ENCODE measurements at regions of chr10 and their contacts with region 1.

Region 1: GRCh38 chr10:9253108-9253507 is 1198.6 kb downstream of the GATA3 start:
- DNase-seq: no peak
- H3K4me3 ChIP-seq: no peak overlapping the region
- H3K27ac ChIP-seq: no peak overlapping the region
- H3K4me1 ChIP-seq: no peaks in the 10 kb centered on the region
- H3K27me3 ChIP-seq: no peaks in the 10 kb centered on the region
- CTCF ChIP-seq: no peak
- POLR2A ChIP-seq: no peak

Region 2: GRCh38 chr10:9311702-9312499 is 58.8 kb after region 1 on chr10:
- intact Hi-C with region 1: no loop called
- DNase-seq: no peak
- H3K4me3 ChIP-seq: no peak overlapping the region
- H3K27ac ChIP-seq: no peak overlapping the region
- H3K4me1 ChIP-seq: no peaks in the 10 kb centered on the region
- H3K27me3 ChIP-seq: no peaks in the 10 kb centered on the region
- CTCF ChIP-seq: no peak
- POLR2A ChIP-seq: no peak

Region 3: DNA sequence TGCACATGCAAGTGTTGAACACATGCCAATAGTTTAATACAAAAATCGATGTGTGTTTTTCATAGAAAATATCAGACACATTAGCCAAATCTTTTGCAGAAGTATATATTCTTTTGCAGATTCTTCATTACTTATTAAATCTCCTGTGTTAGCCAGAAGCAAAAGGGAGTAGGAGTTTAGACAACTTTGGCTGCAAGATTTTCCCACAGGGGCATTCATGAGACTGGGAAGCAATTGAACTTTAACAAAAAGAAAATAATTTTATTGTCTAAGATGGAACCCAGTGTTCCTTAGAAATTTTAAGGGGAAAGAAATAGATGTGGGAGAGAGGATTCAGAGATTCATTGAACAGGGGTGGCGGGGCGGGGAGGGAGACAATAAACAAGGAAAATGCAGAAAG is 137.4 kb after region 1 on chr10:
- intact Hi-C with region 1: no loop called
- DNase-seq: no peak
- H3K4me3 ChIP-seq: no peak overlapping the region
- H3K27ac ChIP-seq: no peak overlapping the region
- H3K4me1 ChIP-seq: no peaks in the 10 kb centered on the region
- H3K27me3 ChIP-seq: no peaks in the 10 kb centered on the region
- CTCF ChIP-seq: no peak
- POLR2A ChIP-seq: no peak

Region 4: DNA sequence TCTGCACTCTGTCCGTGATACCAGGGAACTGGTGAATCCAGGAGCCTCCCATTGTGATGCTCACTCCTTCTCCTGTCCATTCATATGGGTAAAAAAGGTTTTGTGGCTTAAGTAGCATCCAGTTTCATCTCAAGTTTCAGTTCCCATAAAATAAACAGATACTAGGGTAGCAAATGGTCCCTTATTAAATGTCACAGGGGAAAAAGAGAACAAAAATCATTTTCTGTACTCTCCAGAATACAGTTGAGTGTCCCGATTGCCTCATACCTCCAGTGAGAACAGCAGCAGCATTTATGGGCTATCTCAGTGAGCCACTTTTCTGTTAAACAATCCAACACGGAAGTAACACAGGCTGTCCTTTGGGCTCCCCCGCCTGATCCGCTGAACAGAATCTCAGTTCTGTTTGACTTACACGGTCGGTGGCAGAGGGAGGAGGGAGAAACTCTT is 1944.2 kb after region 1 on chr10:
- intact Hi-C with region 1: loop called (anchors 5 kb)
- DNase-seq: no peak
- H3K4me3 ChIP-seq: no peak overlapping the region
- H3K27ac ChIP-seq: no peak overlapping the region
- H3K4me1 ChIP-seq: no peaks in the 10 kb centered on the region
- H3K27me3 ChIP-seq: no peaks in the 10 kb centered on the region
- CTCF ChIP-seq: no peak
- POLR2A ChIP-seq: no peak

Measured in breast epithelium (tissue), 4 donors.